ENCODE measurements at regions of chr15 and their contacts with region 1.

Region 1: GRCh38 chr15:38563723-38564519 is 693 bp downstream of the RASGRP1 start:
- DNase-seq: peak; percentile 86
- H3K4me3 Mint-ChIP-seq: peak overlapping the region; percentile 98
- H3K27ac Mint-ChIP-seq: peak overlapping the region; percentile 95
- H3K4me1 Mint-ChIP-seq: peaks cover 57% of the 10 kb centered on the region
- H3K27me3 Mint-ChIP-seq: no peaks in the 10 kb centered on the region

Region 2: GRCh38 chr15:38145651-38146111 is 418.2 kb before region 1 on chr15:
- CTCF ChIA-PET with region 1: no interaction called
- POLR2A ChIA-PET with region 1: no interaction called
- DNase-seq: no peak
- H3K4me3 Mint-ChIP-seq: no peak overlapping the region
- H3K27ac Mint-ChIP-seq: no peak overlapping the region
- H3K4me1 Mint-ChIP-seq: peaks cover 10% of the 10 kb centered on the region
- H3K27me3 Mint-ChIP-seq: no peaks in the 10 kb centered on the region

Region 3: GRCh38 chr15:38308797-38309196 is 255.1 kb before region 1 on chr15:
- CTCF ChIA-PET with region 1: no interaction called
- POLR2A ChIA-PET with region 1: no interaction called
- DNase-seq: no peak
- H3K4me3 Mint-ChIP-seq: no peak overlapping the region
- H3K27ac Mint-ChIP-seq: no peak overlapping the region
- H3K4me1 Mint-ChIP-seq: peaks cover 10% of the 10 kb centered on the region
- H3K27me3 Mint-ChIP-seq: peaks cover 36% of the 10 kb centered on the region

Region 4: DNA sequence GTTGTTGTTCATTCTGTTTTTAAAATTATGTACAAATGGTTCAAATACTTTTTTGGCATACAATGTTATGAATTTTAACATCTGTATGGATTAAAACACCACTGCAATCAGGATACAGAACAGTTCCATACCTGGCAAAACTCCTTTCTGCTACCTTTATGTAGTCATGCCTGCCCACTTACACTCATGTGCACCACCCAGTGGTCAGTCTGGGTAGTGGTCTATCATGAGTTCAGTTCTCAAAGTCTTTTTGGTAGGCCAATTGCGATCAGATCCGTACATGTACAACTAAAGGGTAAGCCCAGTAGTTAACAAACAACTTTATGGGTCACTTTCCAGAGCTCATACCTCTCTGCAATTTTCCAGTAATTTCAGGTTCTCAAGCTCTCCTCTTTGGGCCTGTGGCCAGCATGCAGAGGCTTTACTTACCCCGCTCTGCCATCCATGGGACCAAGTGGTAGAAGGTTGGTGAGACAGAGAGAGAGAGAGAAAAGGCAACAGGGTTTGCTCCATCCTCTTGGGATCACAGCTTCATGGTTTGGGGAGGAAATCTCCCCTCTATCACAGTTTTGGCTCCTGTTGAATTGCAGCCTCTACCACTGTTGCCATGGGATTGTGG is 173.9 kb before region 1 on chr15:
- CTCF ChIA-PET with region 1: no interaction called
- POLR2A ChIA-PET with region 1: no interaction called
- DNase-seq: peak; percentile 68
- H3K4me3 Mint-ChIP-seq: no peak overlapping the region
- H3K27ac Mint-ChIP-seq: no peak overlapping the region
- H3K4me1 Mint-ChIP-seq: no peaks in the 10 kb centered on the region
- H3K27me3 Mint-ChIP-seq: peaks cover 24% of the 10 kb centered on the region

Region 5: DNA sequence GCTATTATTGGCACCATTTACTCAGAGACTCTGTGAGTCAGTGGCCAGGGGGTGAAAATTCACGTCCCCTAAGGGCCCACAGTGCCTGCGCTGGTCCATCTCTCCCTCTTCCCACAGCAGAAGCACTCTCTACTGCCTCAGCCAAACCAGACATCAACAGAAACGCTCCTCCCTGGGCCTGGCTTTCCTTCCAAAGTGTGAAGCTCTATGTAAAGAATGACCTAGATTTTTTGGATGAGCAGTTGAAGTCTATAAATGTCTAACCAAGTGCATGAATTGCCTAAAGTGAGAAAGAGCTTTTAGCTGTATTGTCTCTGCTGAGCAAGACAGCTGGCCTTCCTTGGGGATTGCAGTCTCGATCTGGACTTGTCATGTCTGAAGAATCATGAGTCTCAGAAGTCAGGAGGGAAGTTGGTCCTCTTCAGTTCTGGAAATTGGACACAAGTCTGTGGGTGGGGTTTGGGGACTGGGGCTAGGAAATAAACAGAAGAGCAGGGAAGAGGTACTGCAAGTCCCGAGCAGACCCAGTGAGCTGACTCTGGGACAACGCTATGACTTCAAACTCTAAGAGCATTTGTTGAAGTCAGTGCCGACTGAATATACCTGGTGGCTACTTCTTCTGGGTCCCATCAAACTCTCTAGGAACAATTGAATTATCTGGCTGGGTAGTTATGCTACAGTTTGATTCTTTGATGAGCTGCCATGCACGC is 28.3 kb before region 1 on chr15:
- CTCF ChIA-PET with region 1: interaction called, 12 read pairs
- POLR2A ChIA-PET with region 1: interaction called, 3 read pairs
- DNase-seq: no peak
- H3K4me3 Mint-ChIP-seq: no peak overlapping the region
- H3K27ac Mint-ChIP-seq: peak overlapping the region; percentile 28
- H3K4me1 Mint-ChIP-seq: peaks cover 96% of the 10 kb centered on the region
- H3K27me3 Mint-ChIP-seq: no peaks in the 10 kb centered on the region

Region 6: DNA sequence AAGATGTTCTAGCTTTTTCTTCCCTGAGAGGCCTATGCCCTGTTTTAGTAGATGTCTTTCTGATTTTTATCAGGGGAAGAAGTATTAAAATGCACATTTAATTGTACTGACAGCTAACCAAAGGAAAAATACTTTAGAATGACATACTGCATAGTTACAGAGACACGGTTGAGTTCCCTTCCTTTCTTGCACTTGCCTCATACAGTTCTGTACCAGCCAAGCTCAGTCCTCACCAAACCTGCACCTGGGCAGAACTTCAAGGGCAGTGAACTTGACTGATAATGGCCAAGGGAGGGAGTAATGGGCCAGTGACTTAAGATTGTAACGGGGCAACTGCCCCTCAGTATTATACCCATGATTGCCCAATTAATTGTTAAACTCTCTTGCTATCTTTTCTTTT is 34.8 kb after region 1 on chr15:
- CTCF ChIA-PET with region 1: interaction called, 15 read pairs
- POLR2A ChIA-PET with region 1: no interaction called
- DNase-seq: no peak
- H3K4me3 Mint-ChIP-seq: no peak overlapping the region
- H3K27ac Mint-ChIP-seq: no peak overlapping the region
- H3K4me1 Mint-ChIP-seq: no peaks in the 10 kb centered on the region
- H3K27me3 Mint-ChIP-seq: no peaks in the 10 kb centered on the region

Region 7: DNA sequence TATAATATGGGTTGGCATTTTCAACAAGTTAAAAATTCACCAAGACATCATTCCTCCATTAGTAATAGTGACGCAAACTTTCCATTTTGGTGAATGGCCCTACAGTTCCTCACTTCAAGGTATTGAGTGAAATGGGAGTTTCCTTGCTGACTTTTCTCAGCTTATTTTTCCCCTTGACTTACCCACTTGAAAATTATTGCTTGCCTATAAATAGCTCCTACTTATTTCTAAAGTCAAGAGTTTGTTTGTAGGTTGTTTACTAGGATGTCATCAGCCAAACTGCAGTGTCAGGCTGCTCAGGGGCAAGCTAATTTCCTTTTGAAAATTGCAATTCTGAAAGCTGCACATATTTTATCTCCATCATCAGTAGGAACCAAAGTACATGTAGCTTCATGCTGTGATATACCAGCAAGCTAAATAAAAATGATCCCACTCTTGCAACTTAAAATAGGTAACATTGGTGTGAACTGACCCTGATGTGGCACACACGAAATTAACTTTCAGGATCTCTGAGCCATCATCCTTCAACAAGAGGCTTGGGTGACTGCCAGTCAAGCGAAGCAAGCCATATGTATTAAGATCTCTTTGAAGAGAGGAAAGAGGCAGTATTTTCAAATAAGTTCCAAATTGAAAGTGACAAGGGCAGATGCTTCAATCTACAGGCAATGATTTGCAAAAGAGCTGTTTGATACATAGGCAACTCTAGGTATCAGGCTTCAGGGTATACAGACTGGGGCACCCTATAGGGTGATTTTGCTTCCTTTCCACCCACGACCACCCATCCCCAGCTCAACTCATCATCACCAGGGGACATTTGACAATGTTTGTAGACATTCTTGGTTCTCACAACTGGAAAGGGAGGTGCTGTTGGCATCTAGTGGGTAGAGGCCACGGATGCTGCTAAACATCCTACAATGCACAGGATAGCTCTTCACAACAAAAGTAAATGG is 67.5 kb after region 1 on chr15:
- CTCF ChIA-PET with region 1: interaction called, 12 read pairs
- POLR2A ChIA-PET with region 1: interaction called, 6 read pairs
- DNase-seq: no peak
- H3K4me3 Mint-ChIP-seq: no peak overlapping the region
- H3K27ac Mint-ChIP-seq: peak overlapping the region; percentile 75
- H3K4me1 Mint-ChIP-seq: peaks cover 41% of the 10 kb centered on the region
- H3K27me3 Mint-ChIP-seq: no peaks in the 10 kb centered on the region

Region 8: GRCh38 chr15:38671675-38672254 is 107.8 kb after region 1 on chr15:
- CTCF ChIA-PET with region 1: interaction called, 20 read pairs
- POLR2A ChIA-PET with region 1: interaction called, 6 read pairs
- DNase-seq: peak; percentile 53
- H3K4me3 Mint-ChIP-seq: peak overlapping the region; percentile 28
- H3K27ac Mint-ChIP-seq: peak overlapping the region; percentile 95
- H3K4me1 Mint-ChIP-seq: peaks cover 79% of the 10 kb centered on the region
- H3K27me3 Mint-ChIP-seq: no peaks in the 10 kb centered on the region

Region 9: GRCh38 chr15:38699633-38700230 is 135.8 kb after region 1 on chr15:
- CTCF ChIA-PET with region 1: interaction called, 21 read pairs
- POLR2A ChIA-PET with region 1: interaction called, 4 read pairs
- DNase-seq: peak; percentile 85
- H3K4me3 Mint-ChIP-seq: peak overlapping the region; percentile 53
- H3K27ac Mint-ChIP-seq: peak overlapping the region; percentile 76
- H3K4me1 Mint-ChIP-seq: peaks cover 66% of the 10 kb centered on the region
- H3K27me3 Mint-ChIP-seq: no peaks in the 10 kb centered on the region

Measured in activated CD4-positive, alpha-beta T cell treated with anti-CD3 and anti-CD28 coated beads, Interleukin-2, amount 10 ng/mL, durations not matched to agents 7 days and 5 days (primary cell).